MCF 10A (cell line): ENCODE measurements at regions of chr2 and their contacts with region 1.

Region 1: DNA sequence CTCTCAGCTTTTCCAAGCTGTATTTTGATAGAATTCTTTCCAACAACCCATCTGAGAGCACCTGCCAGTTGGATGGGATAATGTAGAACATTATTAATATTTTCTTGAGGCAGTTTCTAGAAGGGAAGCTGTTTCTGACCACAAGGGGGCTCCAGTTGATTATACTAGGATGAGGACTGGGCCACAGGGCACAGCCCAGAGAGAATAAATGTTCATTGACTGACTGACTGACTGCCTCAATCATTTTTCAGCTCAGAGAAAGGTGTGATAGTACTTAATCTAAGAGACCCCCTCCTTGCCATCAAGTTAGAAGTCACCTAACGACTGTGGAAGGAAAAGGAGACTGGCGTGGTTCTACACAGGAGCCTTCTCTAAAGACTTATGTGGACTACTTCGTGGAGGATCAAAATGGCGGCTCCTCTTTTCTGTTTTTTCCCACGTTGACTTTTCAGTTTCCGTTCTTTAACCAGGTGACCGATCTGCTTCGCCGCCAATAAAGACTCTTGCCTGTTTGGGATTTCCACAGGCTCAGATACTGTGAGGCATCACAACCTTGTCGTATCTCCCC is 31.9 kb upstream of the CREG2 start:
- DNase-seq: peak; percentile 75
- H3K4me3 Mint-ChIP-seq: no peak overlapping the region
- H3K27ac Mint-ChIP-seq: no peak overlapping the region
- H3K4me1 Mint-ChIP-seq: peaks cover 6% of the 10 kb centered on the region
- H3K27me3 Mint-ChIP-seq: no peaks in the 10 kb centered on the region
- CTCF ChIP-seq: peak; percentile 67

Region 2: DNA sequence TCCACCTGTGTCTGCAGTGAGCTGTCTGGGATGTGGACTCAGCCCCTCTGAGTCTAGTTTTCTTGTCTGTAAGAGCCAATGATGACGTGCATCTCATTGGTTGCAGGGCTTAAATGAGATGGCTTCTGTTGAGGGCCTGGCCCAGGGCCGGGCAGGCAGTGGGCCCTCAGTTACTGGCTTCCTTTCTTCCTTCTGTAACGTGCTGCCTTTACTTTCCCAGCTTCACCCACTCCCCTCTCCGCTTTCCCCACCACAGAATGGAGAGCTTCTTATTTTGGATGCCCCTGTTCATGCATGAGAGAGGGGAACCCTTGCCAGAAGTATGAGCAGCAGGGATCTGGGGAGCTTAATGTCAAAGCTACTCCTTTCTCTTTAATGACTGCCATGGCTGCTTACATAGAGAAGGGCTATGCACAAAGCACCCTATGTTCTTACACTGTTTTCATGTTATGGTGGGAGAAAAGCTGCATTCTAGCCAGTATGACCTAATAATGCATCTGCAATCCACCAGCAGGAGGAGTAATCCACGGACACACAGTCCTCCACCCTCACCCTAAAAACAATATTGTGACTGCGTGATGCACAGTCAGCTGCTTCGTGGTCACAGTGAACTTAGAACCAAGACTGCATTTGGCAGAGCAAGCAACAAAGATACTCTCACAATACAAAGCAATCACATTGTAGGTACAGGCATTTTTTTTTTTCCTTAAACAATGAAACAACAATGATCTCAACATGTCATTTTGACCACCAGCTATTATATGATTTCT is 69.1 kb before region 1 on chr2:
- CTCF ChIA-PET with region 1: interaction called, 13 read pairs
- POLR2A ChIA-PET with region 1: no interaction called
- intact Hi-C with region 1: no loop called
- DNase-seq: peak; percentile 20
- H3K4me3 Mint-ChIP-seq: no peak overlapping the region
- H3K27ac Mint-ChIP-seq: no peak overlapping the region
- H3K4me1 Mint-ChIP-seq: peaks cover 6% of the 10 kb centered on the region
- H3K27me3 Mint-ChIP-seq: no peaks in the 10 kb centered on the region
- CTCF ChIP-seq: no peak

Region 3: DNA sequence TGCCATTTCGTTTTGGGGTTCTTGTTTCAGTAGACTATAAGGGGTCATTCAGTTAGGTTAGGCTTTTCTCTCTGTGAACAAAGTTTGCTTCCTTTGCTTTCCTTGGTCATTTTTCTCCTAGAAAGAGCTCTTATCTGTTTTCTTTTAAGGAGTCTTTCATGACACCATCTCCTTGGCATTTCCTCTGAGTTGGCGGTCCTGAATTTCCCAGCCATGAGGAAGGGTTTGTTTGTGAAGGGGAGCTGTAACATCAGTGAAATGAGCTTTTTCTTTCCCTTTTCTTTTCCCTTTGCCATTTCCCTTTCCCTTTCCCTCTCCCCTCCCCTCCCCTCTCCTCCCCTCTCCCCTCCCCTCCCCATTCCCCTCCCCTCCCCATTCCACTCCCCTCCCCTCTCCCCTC is 340.0 kb after region 1 on chr2:
- CTCF ChIA-PET with region 1: no interaction called
- POLR2A ChIA-PET with region 1: no interaction called
- intact Hi-C with region 1: loop called (anchors 5 kb)
- DNase-seq: peak; percentile 81
- H3K4me3 Mint-ChIP-seq: peak overlapping the region; percentile 44
- H3K27ac Mint-ChIP-seq: peak overlapping the region; percentile 83
- H3K4me1 Mint-ChIP-seq: peaks cover 38% of the 10 kb centered on the region
- H3K27me3 Mint-ChIP-seq: no peaks in the 10 kb centered on the region
- CTCF ChIP-seq: no peak

Region 4: GRCh38 chr2:101831351-101831865 is 412.2 kb after region 1 on chr2:
- CTCF ChIA-PET with region 1: interaction called, 35 read pairs
- POLR2A ChIA-PET with region 1: interaction called, 5 read pairs
- intact Hi-C with region 1: loop called (anchors 1 kb)
- DNase-seq: peak; percentile 72
- H3K4me3 Mint-ChIP-seq: no peak overlapping the region
- H3K27ac Mint-ChIP-seq: peak overlapping the region; percentile 3
- H3K4me1 Mint-ChIP-seq: peaks cover 29% of the 10 kb centered on the region
- H3K27me3 Mint-ChIP-seq: no peaks in the 10 kb centered on the region
- CTCF ChIP-seq: peak; percentile 65

Region 5: DNA sequence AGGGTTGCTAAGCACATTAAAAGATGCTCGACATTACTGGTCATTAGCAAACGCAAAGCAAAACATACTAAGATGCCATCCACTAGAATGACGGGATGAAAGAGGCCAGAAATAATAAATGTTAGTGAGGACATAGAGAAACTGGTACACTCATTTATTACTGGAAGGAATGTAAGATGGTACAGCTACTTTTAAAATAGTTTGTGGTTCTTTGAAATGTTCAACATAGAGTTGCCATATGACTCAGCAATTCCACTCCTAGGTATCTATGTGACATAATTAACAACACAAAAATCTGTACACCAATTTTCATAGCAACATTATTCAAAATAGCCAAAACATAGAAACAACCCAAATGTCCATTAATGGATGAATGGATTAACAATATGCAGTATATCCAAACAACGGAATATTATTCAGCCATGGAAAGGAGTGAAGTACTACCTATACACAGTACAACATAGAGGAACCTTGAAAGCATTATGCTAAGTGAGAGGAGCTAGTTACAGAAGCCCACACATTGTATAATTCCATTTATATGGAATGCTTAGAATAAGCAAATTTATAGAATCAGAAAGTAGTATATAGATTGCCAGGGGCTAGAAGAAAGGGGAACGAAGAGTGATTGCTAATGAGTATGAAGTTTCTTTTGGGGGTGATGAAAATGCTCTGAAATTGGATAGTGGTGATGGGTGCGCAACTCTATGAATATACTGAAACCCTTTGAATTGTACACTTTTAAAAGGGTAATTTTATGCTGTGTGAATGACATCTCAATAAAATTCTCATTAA is 661.5 kb after region 1 on chr2:
- CTCF ChIA-PET with region 1: no interaction called
- POLR2A ChIA-PET with region 1: no interaction called
- intact Hi-C with region 1: no loop called
- DNase-seq: peak; percentile 28
- H3K4me3 Mint-ChIP-seq: no peak overlapping the region
- H3K27ac Mint-ChIP-seq: no peak overlapping the region
- H3K4me1 Mint-ChIP-seq: peaks cover 25% of the 10 kb centered on the region
- H3K27me3 Mint-ChIP-seq: no peaks in the 10 kb centered on the region
- CTCF ChIP-seq: no peak